Activated B cell treated with CpG ODN at 0.5 μM for 24 hours (primary cell): ENCODE measurements at regions of chr5 and their contacts with region 1.

Region 1: GRCh38 chr5:57221049-57221568 is 47.2 kb downstream of the GPBP1 start:
- DNase-seq: no peak
- ATAC-seq: peak; percentile 86
- H3K4me3 Mint-ChIP-seq: no peak overlapping the region
- H3K27ac Mint-ChIP-seq: no peak overlapping the region
- H3K4me1 Mint-ChIP-seq: peaks cover 34% of the 10 kb centered on the region
- H3K27me3 Mint-ChIP-seq: no peaks in the 10 kb centered on the region
- CTCF ChIP-seq: peak; percentile 22

Region 2: GRCh38 chr5:55836191-55836590 is 1384.9 kb before region 1 on chr5:
- CTCF ChIA-PET with region 1: no interaction called
- POLR2A ChIA-PET with region 1: no interaction called
- intact Hi-C with region 1: no loop called
- DNase-seq: no peak
- ATAC-seq: no peak
- H3K4me3 Mint-ChIP-seq: no peak overlapping the region
- H3K27ac Mint-ChIP-seq: no peak overlapping the region
- H3K4me1 Mint-ChIP-seq: no peaks in the 10 kb centered on the region
- H3K27me3 Mint-ChIP-seq: no peaks in the 10 kb centered on the region
- CTCF ChIP-seq: no peak

Region 3: DNA sequence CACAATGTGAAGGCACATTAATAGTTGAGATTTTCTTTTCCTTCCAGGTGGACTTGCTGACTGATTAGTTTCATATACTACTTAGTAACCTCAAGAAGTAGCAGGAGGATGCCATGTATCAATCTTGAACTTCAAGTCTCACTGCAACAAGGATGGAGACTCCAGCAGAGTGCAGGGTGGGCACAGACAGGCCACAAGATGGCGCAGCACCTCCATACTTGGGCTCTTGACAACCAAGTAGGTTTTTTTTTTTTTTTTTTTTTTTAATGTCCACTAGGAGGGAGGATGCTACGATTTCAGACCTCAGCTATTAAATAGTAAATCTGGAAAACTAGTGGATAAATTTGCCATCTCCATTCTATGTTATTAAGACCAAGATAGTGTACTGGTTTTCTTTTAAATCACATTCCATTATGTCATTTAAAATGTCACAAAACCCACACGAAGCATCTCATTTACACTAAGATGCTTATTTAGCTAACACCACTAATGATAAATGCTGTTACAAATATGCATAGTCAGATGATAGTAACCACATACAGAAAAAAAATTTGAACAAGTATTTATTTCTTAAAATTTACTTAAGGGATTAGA is 1284.9 kb before region 1 on chr5:
- CTCF ChIA-PET with region 1: no interaction called
- POLR2A ChIA-PET with region 1: no interaction called
- intact Hi-C with region 1: loop called (anchors 1 kb)
- DNase-seq: peak; percentile 56
- ATAC-seq: peak; percentile 93
- H3K4me3 Mint-ChIP-seq: no peak overlapping the region
- H3K27ac Mint-ChIP-seq: no peak overlapping the region
- H3K4me1 Mint-ChIP-seq: no peaks in the 10 kb centered on the region
- H3K27me3 Mint-ChIP-seq: no peaks in the 10 kb centered on the region
- CTCF ChIP-seq: peak; percentile 48

Region 4: DNA sequence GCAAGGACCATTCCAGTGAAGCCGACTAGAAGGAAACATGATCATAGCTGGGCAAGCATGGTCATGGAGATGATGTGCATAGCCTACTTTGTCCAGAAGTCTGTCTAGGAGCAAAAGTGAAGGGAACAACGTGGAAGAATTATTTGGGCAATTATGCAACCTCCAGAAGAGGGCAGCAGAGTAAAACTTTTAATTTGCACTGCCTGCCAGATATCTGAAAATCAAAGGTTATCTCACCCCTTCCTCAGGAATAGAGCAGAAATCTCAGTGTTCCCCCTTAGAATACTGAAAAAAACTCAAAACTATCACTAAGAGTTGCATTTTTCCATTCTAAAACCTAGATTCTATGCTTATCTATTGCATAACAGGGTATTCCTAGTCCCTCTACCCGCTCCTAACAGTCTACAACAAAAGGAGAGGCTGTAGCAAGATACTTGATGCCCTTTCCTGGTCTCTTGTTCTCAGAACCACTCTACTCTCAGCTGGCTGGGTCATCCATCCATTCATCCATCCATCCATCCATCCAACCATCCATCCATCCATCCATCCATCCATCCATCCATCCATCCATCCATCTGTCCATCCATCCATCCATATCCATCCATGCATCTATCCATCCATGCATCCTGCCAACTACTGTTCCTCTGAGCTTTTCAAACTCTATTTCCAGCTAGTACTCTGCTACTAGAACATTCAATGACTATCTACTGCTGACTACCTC is 320.1 kb before region 1 on chr5:
- CTCF ChIA-PET with region 1: interaction called, 24 read pairs
- POLR2A ChIA-PET with region 1: interaction called, 4 read pairs
- intact Hi-C with region 1: loop called (anchors 1 kb)
- DNase-seq: no peak
- ATAC-seq: peak; percentile 68
- H3K4me3 Mint-ChIP-seq: no peak overlapping the region
- H3K27ac Mint-ChIP-seq: no peak overlapping the region
- H3K4me1 Mint-ChIP-seq: no peaks in the 10 kb centered on the region
- H3K27me3 Mint-ChIP-seq: no peaks in the 10 kb centered on the region
- CTCF ChIP-seq: peak; percentile 10

Region 5: DNA sequence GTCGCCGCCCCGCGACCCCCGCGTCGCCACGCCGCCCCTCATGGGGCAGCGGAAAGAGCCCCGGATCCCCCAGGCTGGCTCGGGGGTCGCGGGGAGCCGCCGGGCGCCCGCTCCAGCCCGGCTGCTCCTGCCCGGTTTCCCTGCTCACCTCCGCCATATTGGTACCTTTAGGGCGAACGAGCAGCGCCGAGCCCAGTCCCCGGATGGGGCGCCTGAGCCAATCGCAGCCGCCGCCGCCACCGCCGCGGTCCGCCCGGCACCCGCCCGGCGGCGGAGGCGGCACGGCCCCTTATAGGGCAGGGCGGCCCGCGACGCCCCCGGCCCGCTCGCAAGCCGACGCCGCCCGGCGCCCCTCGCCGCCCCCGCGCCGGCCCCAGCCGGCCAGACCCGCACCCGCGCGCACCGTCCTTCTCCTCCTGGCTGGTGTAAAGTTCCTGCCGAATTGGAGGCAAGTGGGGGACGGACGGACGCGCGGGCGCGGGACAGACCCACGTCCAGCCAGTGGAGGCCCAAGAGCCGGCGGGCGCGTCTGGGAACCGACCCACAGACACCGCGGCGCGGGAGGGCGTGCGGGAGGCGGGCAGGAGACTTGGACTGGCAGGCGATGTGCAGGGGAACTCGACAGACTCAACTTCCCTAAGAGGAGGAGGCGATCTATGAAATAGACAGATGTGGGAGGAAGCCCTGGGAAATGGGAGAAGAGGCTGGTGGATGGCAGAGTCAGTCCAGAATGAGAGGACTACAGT is 269.0 kb before region 1 on chr5 and contains the start of gene MIER3:
- CTCF ChIA-PET with region 1: interaction called, 3 read pairs
- POLR2A ChIA-PET with region 1: interaction called, 4 read pairs
- intact Hi-C with region 1: loop called (anchors 1 kb)
- DNase-seq: peak; percentile 75
- ATAC-seq: peak; percentile 96
- H3K4me3 Mint-ChIP-seq: peak within 1 kb of the TSS; percentile 95
- H3K27ac Mint-ChIP-seq: peak within 1 kb of the TSS; percentile 80
- H3K4me1 Mint-ChIP-seq: peaks cover 20% of the 10 kb centered on the region
- H3K27me3 Mint-ChIP-seq: peaks cover 7% of the 10 kb centered on the region
- CTCF ChIP-seq: no peak
- total RNA-seq, gene MIER3: 22.2 and 23.5 TPM in 2 replicates

Region 6: GRCh38 chr5:57137401-57137800 is 83.7 kb before region 1 on chr5:
- CTCF ChIA-PET with region 1: interaction called, 30 read pairs
- POLR2A ChIA-PET with region 1: interaction called, 5 read pairs
- intact Hi-C with region 1: loop called (anchors 1 kb)
- DNase-seq: no peak
- ATAC-seq: no peak
- H3K4me3 Mint-ChIP-seq: no peak overlapping the region
- H3K27ac Mint-ChIP-seq: no peak overlapping the region
- H3K4me1 Mint-ChIP-seq: no peaks in the 10 kb centered on the region
- H3K27me3 Mint-ChIP-seq: peaks cover 14% of the 10 kb centered on the region
- CTCF ChIP-seq: no peak

Region 7: DNA sequence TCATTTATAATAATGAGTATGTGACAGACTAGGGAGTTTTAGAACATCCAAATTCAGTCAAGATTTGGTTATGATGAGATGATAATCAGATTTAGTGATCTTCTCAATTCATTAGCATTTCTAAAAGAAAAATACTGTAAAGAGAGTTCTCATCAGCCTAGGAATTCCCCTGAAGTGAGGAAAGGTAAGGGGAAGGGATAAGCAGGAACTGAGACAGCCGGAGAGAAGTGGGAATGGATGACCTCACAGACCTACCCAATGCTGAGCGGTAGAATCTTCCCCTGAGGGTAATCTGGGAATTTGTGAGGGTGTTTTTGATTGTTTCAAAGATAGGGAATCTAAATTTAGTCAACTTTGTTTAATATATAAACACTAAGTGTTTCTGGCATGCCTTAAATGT is 64.0 kb before region 1 on chr5:
- CTCF ChIA-PET with region 1: no interaction called
- POLR2A ChIA-PET with region 1: no interaction called
- intact Hi-C with region 1: no loop called
- DNase-seq: no peak
- ATAC-seq: no peak
- H3K4me3 Mint-ChIP-seq: no peak overlapping the region
- H3K27ac Mint-ChIP-seq: no peak overlapping the region
- H3K4me1 Mint-ChIP-seq: no peaks in the 10 kb centered on the region
- H3K27me3 Mint-ChIP-seq: no peaks in the 10 kb centered on the region
- CTCF ChIP-seq: no peak